Activated T-helper 1 cell treated with anti-CD3 and anti-CD28 coated beads, Interleukin-12 subunit alpha, Interleukin-12 subunit beta, Interleukin-2, Interleukin-4 antibody, amounts not matched to agents 30 ng/mL and 10 ng/mL and 1 ng/mL, durations not matched to agents 14 hours and 24 hours and 36 hours (primary cell): ENCODE measurements at regions of chr17 and their contacts with region 1.

Region 1: DNA sequence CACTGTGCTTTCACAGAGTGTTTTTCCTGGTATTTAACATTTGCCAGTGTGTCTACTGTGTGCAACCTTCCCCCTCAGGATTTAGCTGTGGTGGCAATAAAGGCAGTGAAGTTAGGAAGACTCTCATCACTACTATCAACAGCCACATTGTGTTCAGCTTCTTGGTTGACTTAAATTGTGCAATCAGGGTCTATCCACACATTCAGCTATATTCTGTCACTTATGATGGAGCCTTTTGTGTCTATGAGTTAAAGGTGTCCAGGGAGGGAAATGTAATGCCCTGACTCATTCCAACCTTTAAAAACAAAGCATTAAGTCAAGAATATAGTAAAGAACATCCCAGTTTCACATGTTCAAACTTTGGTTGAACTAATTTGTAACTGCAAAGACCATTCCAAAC is 176.3 kb downstream of the CA10 start:
- DNase-seq: no peak
- H3K4me3 Mint-ChIP-seq: no peak overlapping the region
- H3K27ac Mint-ChIP-seq: no peak overlapping the region
- H3K4me1 Mint-ChIP-seq: no peaks in the 10 kb centered on the region
- H3K27me3 Mint-ChIP-seq: peaks cover 2% of the 10 kb centered on the region

Region 2: GRCh38 chr17:51935477-51935876 is 46.7 kb before region 1 on chr17:
- intact Hi-C with region 1: loop called (anchors 1 kb)
- DNase-seq: no peak
- H3K4me3 Mint-ChIP-seq: no peak overlapping the region
- H3K27ac Mint-ChIP-seq: no peak overlapping the region
- H3K4me1 Mint-ChIP-seq: no peaks in the 10 kb centered on the region
- H3K27me3 Mint-ChIP-seq: no peaks in the 10 kb centered on the region